Spleen (tissue), 13 donors: ENCODE measurements at regions of chr6 and their contacts with region 1.

Region 1: DNA sequence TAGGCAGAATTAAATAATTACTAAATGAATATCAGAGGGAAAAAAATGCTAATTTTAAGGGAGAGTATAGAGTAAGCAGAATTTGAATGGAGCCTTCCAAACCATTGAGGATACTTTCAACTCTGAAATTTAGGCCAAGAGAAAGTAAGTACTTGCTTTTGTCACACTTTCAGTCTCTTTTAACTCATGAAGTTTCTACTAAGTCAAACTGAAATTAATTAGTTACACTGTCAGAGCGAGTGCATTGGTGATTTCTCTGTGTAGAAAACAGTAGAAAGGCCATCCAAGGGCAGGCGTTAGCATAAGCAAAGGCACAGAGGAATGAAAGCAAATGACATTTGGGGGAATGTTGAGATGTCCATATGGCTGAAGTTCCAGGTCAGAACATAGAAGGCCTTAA is 92.9 kb downstream of the PLEKHG1 start:
- DNase-seq: no peak
- H3K4me3 ChIP-seq: no peak overlapping the region
- H3K27ac ChIP-seq: peak overlapping the region in 7 of 8 donors; percentile 61 to 91 (median 84)
- H3K4me1 ChIP-seq: peaks cover 62 to 100% (median 95%) of the 10 kb centered on the region in 6 donors
- H3K27me3 ChIP-seq: no peaks in the 10 kb centered on the region
- CTCF ChIP-seq: no peak
- POLR2A ChIP-seq: no peak

Region 2: DNA sequence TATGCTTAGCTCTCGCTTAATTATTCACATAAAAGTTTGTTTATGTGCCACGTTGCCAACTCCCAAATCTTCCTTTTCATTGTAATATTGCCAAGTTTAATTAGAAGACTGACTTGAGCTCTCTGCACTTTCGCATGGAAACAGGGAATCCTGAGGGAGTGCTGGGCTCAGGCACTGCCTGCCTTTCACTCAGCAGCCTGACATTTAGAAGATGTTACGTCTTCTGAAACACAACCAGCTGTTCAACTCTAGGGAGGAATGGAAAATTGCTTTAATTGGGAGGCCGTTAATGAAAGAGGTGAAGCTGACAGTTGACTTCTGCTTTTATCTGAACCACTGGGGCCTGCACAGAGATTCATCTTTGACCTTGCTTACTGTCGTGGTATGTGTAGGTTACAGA is 95.5 kb after region 1 on chr6:
- intact Hi-C with region 1: loop called (anchors 10 kb)
- DNase-seq: no peak
- H3K4me3 ChIP-seq: no peak overlapping the region
- H3K27ac ChIP-seq: peak overlapping the region in 5 of 8 donors; percentile 6 to 55 (median 33)
- H3K4me1 ChIP-seq: peaks cover 0 to 18% (median 2%) of the 10 kb centered on the region in 6 donors
- H3K27me3 ChIP-seq: no peaks in the 10 kb centered on the region
- CTCF ChIP-seq: no peak
- POLR2A ChIP-seq: no peak